ENCODE measurements at regions of chr10 and their contacts with region 1.

Region 1: DNA sequence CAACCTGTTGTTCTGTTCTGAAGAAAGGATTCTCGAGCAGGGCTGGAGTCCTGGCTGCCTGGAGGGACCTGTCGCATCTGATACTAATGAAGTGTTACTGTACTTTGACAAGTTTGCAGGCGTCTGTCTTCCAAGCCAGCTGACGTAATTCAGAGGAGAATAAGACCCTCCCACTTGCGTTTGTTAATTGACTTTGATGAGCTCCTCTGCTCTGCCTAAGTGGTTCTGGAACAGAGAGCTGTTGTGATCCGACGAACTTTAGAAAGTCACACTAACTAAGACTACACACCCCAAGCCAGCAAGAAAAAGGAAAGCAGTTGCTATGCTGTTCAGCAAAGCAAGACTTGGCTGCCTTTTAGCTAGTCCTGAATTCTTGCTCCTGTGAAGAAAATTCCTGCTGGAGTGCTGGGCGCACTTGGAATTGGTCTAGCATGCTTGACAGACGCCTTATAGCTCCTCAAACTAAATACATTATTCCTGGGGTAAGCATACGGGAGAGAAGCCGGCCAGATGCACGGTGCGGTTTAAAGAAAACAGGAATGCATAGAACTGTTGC is 200.3 kb downstream of the CACNB2 start:
- DNase-seq: peak; percentile 44
- ATAC-seq: peak; percentile 67 to 88

Region 2: GRCh38 chr10:18463673-18464211 is 123.2 kb after region 1 on chr10:
- intact Hi-C with region 1: loop called in 1 of 2 experiments (anchors 10 kb)
- DNase-seq: peak; percentile 19
- ATAC-seq: peak; percentile 79 to 85

Measured in left cardiac atrium (tissue), 4 donors.